CD4-positive, alpha-beta T cell (primary cell): ENCODE measurements at regions of chr4 and their contacts with region 1.

Region 1: DNA sequence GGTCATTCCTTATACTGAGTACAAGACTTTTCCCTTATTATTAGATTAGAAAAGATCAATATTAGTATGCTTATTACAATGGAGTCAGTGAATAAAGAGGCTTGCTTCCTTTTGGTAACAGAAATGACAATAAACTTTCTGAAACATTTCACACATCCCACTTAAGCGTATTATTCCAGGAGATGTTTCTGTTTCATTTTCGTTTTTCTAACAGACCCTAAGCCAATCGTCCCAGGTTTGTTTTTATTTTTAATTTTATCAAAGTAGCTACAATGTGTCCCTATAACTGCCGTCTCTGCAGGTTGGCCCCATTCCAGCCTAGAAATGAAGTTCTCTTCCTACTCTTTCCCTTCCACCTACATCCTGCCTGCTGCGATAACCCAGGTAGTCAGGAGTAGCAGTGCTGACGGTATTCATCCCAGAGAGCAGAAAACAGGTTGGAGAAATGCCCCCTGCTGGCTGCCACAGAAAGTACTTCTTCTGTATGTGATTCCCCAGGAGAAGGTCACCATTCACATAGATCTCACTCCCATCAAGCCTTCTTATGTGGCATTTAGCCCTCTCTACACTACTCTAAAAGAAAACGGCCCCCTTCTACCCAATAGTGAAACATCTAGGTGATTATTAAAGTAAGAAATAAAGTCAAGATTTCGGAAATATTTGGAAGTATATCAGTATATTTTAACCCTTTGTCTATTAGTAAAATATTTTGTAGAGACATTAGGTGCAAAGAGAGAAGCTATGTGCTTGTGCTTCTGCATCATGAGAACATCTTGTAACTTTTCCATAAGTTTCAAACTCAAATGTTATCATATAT is 40.4 kb downstream of the ENPEP start:
- DNase-seq: peak; percentile 58 to 85 (median 64)
- ATAC-seq: peak; percentile 94
- H3K4me3 ChIP-seq: peak overlapping the region; percentile 62
- H3K4me3 Mint-ChIP-seq: peak overlapping the region; percentile 91
- H3K27ac ChIP-seq: no peak overlapping the region
- H3K27ac Mint-ChIP-seq: no peak overlapping the region
- H3K4me1 ChIP-seq: peaks cover 3% of the 10 kb centered on the region
- H3K4me1 Mint-ChIP-seq: peaks cover 10% of the 10 kb centered on the region
- H3K27me3 ChIP-seq: no peaks in the 10 kb centered on the region
- H3K27me3 Mint-ChIP-seq: peaks cover 7% of the 10 kb centered on the region
- CTCF ChIP-seq: peak; percentile 81

Region 2: GRCh38 chr4:109998867-109999584 is 517.3 kb before region 1 on chr4:
- CTCF ChIA-PET with region 1: interaction called, 13 read pairs
- POLR2A ChIA-PET with region 1: interaction called, 6 read pairs
- intact Hi-C with region 1: loop called (anchors 1 kb)
- DNase-seq: peak in 6 of 14 experiments; percentile 1 to 84 (median 56)
- ATAC-seq: peak; percentile 67
- H3K4me3 ChIP-seq: no peak overlapping the region
- H3K4me3 Mint-ChIP-seq: no peak overlapping the region
- H3K27ac ChIP-seq: no peak overlapping the region
- H3K27ac Mint-ChIP-seq: no peak overlapping the region
- H3K4me1 ChIP-seq: no peaks in the 10 kb centered on the region
- H3K4me1 Mint-ChIP-seq: no peaks in the 10 kb centered on the region
- H3K27me3 ChIP-seq: peaks cover 0 to 6% of the 10 kb centered on the region in 2 experiments
- H3K27me3 Mint-ChIP-seq: peaks cover 21% of the 10 kb centered on the region
- CTCF ChIP-seq: peak; percentile 92

Region 3: GRCh38 chr4:110005461-110006056 is 510.8 kb before region 1 on chr4:
- CTCF ChIA-PET with region 1: interaction called, 10 read pairs
- POLR2A ChIA-PET with region 1: interaction called, 4 read pairs
- intact Hi-C with region 1: loop called (anchors 1 kb)
- DNase-seq: peak in 3 of 14 experiments; percentile 72 to 79 (median 77)
- ATAC-seq: no peak
- H3K4me3 ChIP-seq: no peak overlapping the region
- H3K4me3 Mint-ChIP-seq: no peak overlapping the region
- H3K27ac ChIP-seq: no peak overlapping the region
- H3K27ac Mint-ChIP-seq: no peak overlapping the region
- H3K4me1 ChIP-seq: no peaks in the 10 kb centered on the region
- H3K4me1 Mint-ChIP-seq: no peaks in the 10 kb centered on the region
- H3K27me3 ChIP-seq: no peaks in the 10 kb centered on the region
- H3K27me3 Mint-ChIP-seq: no peaks in the 10 kb centered on the region
- CTCF ChIP-seq: peak; percentile 88

Region 4: GRCh38 chr4:110211007-110211769 is 305.1 kb before region 1 on chr4:
- CTCF ChIA-PET with region 1: no interaction called
- POLR2A ChIA-PET with region 1: no interaction called
- intact Hi-C with region 1: loop called (anchors 5 kb)
- DNase-seq: peak in 8 of 14 experiments; percentile 4 to 70 (median 34)
- ATAC-seq: peak; percentile 80
- H3K4me3 ChIP-seq: no peak overlapping the region
- H3K4me3 Mint-ChIP-seq: no peak overlapping the region
- H3K27ac ChIP-seq: no peak overlapping the region
- H3K27ac Mint-ChIP-seq: no peak overlapping the region
- H3K4me1 ChIP-seq: peaks cover 2% of the 10 kb centered on the region
- H3K4me1 Mint-ChIP-seq: peaks cover 4% of the 10 kb centered on the region
- H3K27me3 ChIP-seq: no peaks in the 10 kb centered on the region
- H3K27me3 Mint-ChIP-seq: peaks cover under 1% of the 10 kb centered on the region
- CTCF ChIP-seq: peak; percentile 82

Region 5: DNA sequence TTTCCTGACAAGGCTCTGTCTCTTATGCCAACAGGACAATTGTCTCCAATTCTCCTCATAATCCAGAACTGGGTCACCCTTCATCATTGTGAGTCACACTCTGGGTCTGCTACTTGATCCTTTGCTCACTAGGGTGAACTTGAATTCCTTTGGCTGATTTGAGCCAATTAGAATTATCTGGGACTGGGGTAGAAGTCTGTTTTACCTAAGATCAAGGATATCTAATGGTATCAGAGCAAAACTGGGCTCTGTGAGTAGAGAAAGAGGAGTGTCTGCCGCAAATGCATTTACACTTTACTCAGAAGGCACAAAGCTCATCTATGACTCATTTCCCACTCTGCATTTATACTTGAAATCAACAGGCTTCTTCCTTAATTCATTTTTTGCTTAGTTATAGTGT is 33.9 kb after region 1 on chr4:
- CTCF ChIA-PET with region 1: no interaction called
- POLR2A ChIA-PET with region 1: no interaction called
- intact Hi-C with region 1: no loop called
- DNase-seq: no peak
- ATAC-seq: no peak
- H3K4me3 ChIP-seq: no peak overlapping the region
- H3K4me3 Mint-ChIP-seq: no peak overlapping the region
- H3K27ac ChIP-seq: no peak overlapping the region
- H3K27ac Mint-ChIP-seq: no peak overlapping the region
- H3K4me1 ChIP-seq: no peaks in the 10 kb centered on the region
- H3K4me1 Mint-ChIP-seq: no peaks in the 10 kb centered on the region
- H3K27me3 ChIP-seq: peaks cover 0 to 4% of the 10 kb centered on the region in 2 experiments
- H3K27me3 Mint-ChIP-seq: peaks cover 20% of the 10 kb centered on the region
- CTCF ChIP-seq: no peak